Left cardiac atrium (tissue), 4 donors: ENCODE measurements at regions of chr13 and their contacts with region 1.

Region 1: GRCh38 chr13:80048802-80049201 is 292.1 kb downstream of the SPRY2 start:
- DNase-seq: peak; percentile 84
- ATAC-seq: peak; percentile 98 to 99

Region 2: GRCh38 chr13:79966493-79966895 is 82.3 kb before region 1 on chr13:
- intact Hi-C with region 1: no loop called
- DNase-seq: no peak
- ATAC-seq: no peak

Region 3: GRCh38 chr13:80132741-80133601 is 84.2 kb after region 1 on chr13:
- intact Hi-C with region 1: loop called in 1 of 2 experiments (anchors 5 kb)
- DNase-seq: peak; percentile 56
- ATAC-seq: peak; percentile 90 to 92